Activated CD4-positive, alpha-beta T cell treated with anti-CD3 and anti-CD28 coated beads for 36 hours (primary cell): ENCODE measurements at regions of chr13 and their contacts with region 1.

Region 1: DNA sequence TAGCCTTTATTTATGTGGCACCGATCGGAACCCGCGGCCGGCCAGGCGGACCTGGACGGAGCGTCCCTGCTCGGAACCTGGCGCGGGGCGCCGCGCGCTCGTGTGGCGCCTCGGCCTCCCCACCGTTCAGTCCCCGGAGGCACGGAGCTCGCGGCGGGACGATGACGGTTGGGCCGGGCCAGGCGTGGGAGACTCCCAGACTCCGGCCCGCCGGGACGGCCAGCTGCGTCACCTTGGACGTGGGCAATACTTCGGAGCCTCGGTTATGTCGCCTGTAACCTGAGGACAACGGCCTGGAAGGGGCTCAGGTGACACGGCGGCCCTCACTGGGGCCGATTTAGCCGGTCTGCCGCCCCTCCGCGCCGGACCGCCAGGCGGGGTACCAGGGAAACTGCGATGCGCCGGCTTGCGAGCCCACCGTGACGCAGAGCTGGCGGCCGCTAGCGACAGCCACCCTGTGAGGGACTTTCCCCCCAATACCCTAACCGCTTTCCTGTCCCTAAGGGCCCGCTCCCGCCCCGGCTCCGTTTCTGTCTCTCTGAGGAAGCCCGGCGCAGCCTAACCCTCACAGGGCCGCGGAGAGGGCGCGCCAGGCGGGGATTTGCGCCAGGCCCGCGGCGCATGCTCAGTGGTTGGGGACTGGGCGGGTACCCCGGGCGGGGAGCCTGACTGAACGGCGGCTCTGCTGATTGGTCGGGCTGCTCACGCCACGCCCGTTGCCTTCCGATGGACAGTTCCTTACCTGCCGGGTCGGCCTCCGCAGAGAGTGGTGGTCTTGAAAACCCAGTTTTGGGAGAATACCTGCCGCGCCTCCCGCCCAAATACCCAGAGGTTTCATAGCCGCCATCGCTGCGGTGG is 109.5 kb upstream of the DOCK9 start:
- DNase-seq: peak; percentile 96
- ATAC-seq: peak; percentile 89
- H3K4me3 Mint-ChIP-seq: peak overlapping the region; percentile 89
- H3K27ac Mint-ChIP-seq: peak overlapping the region; percentile 95
- H3K4me1 Mint-ChIP-seq: peaks cover 31% of the 10 kb centered on the region
- H3K27me3 Mint-ChIP-seq: no peaks in the 10 kb centered on the region

Region 2: GRCh38 chr13:97975848-97976609 is 1111.3 kb before region 1 on chr13:
- CTCF ChIA-PET with region 1: no interaction called
- POLR2A ChIA-PET with region 1: no interaction called
- intact Hi-C with region 1: loop called in 1 of 2 experiments (anchors 5 kb)
- DNase-seq: peak; percentile 94
- ATAC-seq: peak; percentile 92
- H3K4me3 Mint-ChIP-seq: peak overlapping the region; percentile 99
- H3K27ac Mint-ChIP-seq: peak overlapping the region; percentile 96
- H3K4me1 Mint-ChIP-seq: peaks cover 31% of the 10 kb centered on the region
- H3K27me3 Mint-ChIP-seq: no peaks in the 10 kb centered on the region

Region 3: DNA sequence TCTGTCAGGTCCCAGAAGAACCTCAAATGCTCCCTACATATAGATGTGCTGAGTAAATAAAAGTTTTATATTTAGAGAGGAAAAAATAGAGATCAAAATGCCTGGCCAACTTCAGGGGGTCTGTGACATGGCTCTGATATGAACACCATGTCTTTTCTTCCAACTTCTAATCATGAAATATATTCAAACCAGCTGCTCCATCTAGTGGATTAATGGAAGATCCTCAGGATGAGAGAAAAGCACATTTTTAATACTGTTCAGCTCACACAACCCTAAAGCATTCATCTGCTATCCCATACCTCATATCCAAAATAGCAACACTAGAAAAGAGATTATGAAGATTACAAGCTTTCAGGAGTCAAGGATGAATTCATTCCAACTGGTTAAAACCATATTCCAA is 53.5 kb before region 1 on chr13:
- CTCF ChIA-PET with region 1: interaction called, 16 read pairs
- POLR2A ChIA-PET with region 1: no interaction called
- intact Hi-C with region 1: loop called (anchors 1 to 2 kb)
- DNase-seq: no peak
- ATAC-seq: peak; percentile 56
- H3K4me3 Mint-ChIP-seq: no peak overlapping the region
- H3K27ac Mint-ChIP-seq: no peak overlapping the region
- H3K4me1 Mint-ChIP-seq: peaks cover 51% of the 10 kb centered on the region
- H3K27me3 Mint-ChIP-seq: no peaks in the 10 kb centered on the region

Region 4: DNA sequence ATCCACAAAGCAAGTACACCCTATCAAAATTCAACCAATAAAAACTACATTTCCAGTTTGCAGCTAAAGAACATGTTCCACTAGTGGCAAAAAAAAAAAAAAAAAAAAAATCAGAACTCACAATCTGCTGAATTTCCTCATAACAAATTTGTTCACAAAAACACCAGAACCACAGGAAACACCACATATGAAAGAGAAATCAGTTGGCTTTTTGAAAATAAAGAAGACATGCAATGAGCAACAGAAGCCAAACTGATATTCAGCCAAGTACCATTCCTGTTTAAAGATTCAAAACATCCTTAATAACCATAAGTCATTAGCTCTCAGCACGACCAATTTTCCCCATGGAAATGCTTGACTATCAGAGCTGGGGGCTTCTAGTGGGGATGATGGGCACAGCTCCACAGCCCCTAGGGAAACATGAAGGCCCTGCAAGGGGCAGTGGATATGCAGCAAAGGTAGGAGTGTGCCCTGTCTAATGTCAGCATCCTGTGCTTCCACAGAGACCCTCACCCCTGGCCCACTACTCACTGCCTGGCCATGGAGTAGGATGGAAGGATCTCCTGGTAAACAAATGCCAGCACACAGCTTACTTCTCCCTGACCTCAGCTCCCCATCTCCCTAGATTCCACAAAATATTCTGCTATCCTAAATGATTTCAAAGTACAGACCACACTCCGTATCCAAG is 35.4 kb before region 1 on chr13:
- CTCF ChIA-PET with region 1: interaction called, 8 read pairs
- POLR2A ChIA-PET with region 1: no interaction called
- intact Hi-C with region 1: loop called (anchors 1 to 2 kb)
- DNase-seq: no peak
- ATAC-seq: peak; percentile 16
- H3K4me3 Mint-ChIP-seq: peak overlapping the region; percentile 15
- H3K27ac Mint-ChIP-seq: peak overlapping the region; percentile 44
- H3K4me1 Mint-ChIP-seq: peaks cover 75% of the 10 kb centered on the region
- H3K27me3 Mint-ChIP-seq: no peaks in the 10 kb centered on the region

Region 5: GRCh38 chr13:99124794-99125316 is 37.5 kb after region 1 on chr13:
- CTCF ChIA-PET with region 1: no interaction called
- POLR2A ChIA-PET with region 1: interaction called, 4 read pairs
- intact Hi-C with region 1: loop called (anchors 2 to 5 kb)
- DNase-seq: peak; percentile 12
- ATAC-seq: peak; percentile 94
- H3K4me3 Mint-ChIP-seq: peak overlapping the region; percentile 48
- H3K27ac Mint-ChIP-seq: peak overlapping the region; percentile 51
- H3K4me1 Mint-ChIP-seq: peaks cover 44% of the 10 kb centered on the region
- H3K27me3 Mint-ChIP-seq: no peaks in the 10 kb centered on the region

Region 6: DNA sequence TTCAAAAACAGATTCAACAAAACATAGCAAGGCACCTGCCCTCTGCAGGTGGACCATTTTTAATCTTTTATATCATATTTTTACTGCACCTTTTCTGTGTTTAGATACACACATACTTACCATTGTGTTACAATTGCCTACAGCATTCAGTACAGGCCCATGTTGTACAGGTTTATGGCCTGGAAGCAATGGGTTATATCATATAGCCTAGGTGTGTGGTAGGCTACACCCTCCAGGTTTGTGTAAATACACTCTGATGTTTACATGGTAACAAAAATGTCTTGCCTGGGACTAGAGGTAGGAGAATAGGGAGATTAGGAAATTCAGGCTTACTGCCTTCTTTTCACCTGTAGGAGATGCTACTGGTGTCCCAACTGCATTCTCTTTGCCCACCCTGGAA is 105.2 kb after region 1 on chr13:
- CTCF ChIA-PET with region 1: no interaction called
- POLR2A ChIA-PET with region 1: no interaction called
- intact Hi-C with region 1: no loop called
- DNase-seq: no peak
- ATAC-seq: no peak
- H3K4me3 Mint-ChIP-seq: no peak overlapping the region
- H3K27ac Mint-ChIP-seq: no peak overlapping the region
- H3K4me1 Mint-ChIP-seq: peaks cover 15% of the 10 kb centered on the region
- H3K27me3 Mint-ChIP-seq: no peaks in the 10 kb centered on the region

Region 7: GRCh38 chr13:99258210-99258860 is 171.0 kb after region 1 on chr13 and contains the start of gene GPR18:
- CTCF ChIA-PET with region 1: no interaction called
- POLR2A ChIA-PET with region 1: no interaction called
- intact Hi-C with region 1: loop called in 1 of 2 experiments (anchors 2 kb)
- DNase-seq: peak; percentile 62
- ATAC-seq: peak; percentile 88
- H3K4me3 Mint-ChIP-seq: peak within 1 kb of the TSS; percentile 80
- H3K27ac Mint-ChIP-seq: peak within 1 kb of the TSS; percentile 95
- H3K4me1 Mint-ChIP-seq: peaks cover 76% of the 10 kb centered on the region
- H3K27me3 Mint-ChIP-seq: no peaks in the 10 kb centered on the region
- total RNA-seq, gene GPR18: 6.0 to 9.5 TPM

Region 8: GRCh38 chr13:99507054-99507453 is 419.7 kb after region 1 on chr13:
- CTCF ChIA-PET with region 1: no interaction called
- POLR2A ChIA-PET with region 1: no interaction called
- intact Hi-C with region 1: no loop called
- DNase-seq: no peak
- ATAC-seq: no peak
- H3K4me3 Mint-ChIP-seq: no peak overlapping the region
- H3K27ac Mint-ChIP-seq: no peak overlapping the region
- H3K4me1 Mint-ChIP-seq: peaks cover 73% of the 10 kb centered on the region
- H3K27me3 Mint-ChIP-seq: no peaks in the 10 kb centered on the region

Region 9: GRCh38 chr13:100674848-100675660 is 1587.7 kb after region 1 on chr13:
- CTCF ChIA-PET with region 1: no interaction called
- POLR2A ChIA-PET with region 1: no interaction called
- intact Hi-C with region 1: loop called in 1 of 2 experiments (anchors 10 kb)
- DNase-seq: peak; percentile 99
- ATAC-seq: peak; percentile 96
- H3K4me3 Mint-ChIP-seq: peak overlapping the region; percentile 77
- H3K27ac Mint-ChIP-seq: peak overlapping the region; percentile 83
- H3K4me1 Mint-ChIP-seq: peaks cover 23% of the 10 kb centered on the region
- H3K27me3 Mint-ChIP-seq: peaks cover 7% of the 10 kb centered on the region